ENCODE measurements at regions of chr6 and their contacts with region 1.

Region 1: DNA sequence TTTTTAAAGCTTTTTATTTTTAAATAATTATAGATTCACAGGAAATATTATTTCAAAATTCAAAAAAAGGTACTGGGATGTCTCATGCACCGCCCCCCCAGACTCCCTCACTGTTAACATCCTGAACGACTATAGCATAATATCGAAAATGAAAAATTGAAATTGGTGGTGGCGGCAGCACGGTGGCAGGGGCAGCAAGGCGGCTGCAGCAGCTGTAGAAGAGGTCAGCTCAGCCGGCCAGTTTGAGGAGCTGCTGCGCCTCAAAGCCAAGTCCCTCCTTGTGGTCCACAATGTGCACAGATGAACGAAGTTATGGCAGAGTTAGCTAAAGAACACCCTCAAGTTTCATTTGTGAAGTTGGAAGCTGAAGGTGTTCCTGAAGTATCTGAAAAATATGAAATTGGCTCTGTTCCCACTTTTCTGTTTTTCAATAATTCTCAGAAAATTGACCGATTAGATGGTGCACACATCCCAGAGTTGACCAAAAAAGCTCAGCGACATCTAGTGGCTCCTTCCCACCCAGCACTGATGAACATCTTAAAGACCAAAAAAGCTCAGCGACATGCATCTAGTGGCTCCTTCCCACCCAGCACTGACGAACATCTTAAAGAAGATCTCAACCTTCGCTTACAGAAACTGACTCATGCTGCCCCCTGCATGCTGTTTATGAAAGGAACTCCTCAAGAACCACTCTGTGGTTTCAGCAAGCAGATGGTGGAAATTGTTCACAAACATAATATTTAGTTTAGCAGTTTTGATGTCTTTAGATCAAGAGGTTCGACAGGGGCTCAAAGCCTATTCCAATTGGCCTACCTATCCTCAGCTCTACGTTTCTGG is 100.8 kb downstream of the FAM217A start:
- DNase-seq: peak; percentile 50 to 66 (median 56)
- H3K4me3 ChIP-seq: no peak overlapping the region
- H3K4me3 Mint-ChIP-seq: peak overlapping the region in 6 of 8 donors; percentile 49 to 76 (median 63)
- H3K27ac ChIP-seq: no peak overlapping the region
- H3K27ac Mint-ChIP-seq: peak overlapping the region in 2 of 7 donors; percentile 52 to 73
- H3K4me1 ChIP-seq: peaks cover 4% of the 10 kb centered on the region
- H3K4me1 Mint-ChIP-seq: peaks cover 7 to 12% (median 8%) of the 10 kb centered on the region in 4 donors
- H3K27me3 ChIP-seq: no peaks in the 10 kb centered on the region
- H3K27me3 Mint-ChIP-seq: peaks cover 0 to 3% of the 10 kb centered on the region in 2 donors

Region 2: DNA sequence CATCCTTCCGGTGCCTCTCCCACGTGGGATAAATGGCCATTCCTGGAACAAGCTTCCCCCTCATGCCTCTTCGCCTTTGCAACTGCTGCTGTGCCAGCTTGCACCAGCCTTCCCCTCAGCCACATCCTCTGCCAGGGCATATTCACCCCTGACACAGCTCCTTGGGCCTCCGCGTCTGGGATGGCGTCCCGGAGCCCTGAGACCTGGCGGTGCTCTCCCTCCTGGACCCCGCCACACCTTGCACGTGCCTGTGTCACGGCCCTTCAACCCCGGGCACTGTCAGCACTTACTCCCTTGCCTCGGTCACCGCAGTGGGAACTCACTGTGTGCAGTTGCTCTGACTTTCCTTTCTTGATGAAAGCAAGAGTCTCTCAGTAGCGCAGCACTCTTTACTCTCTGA is 846.4 kb before region 1 on chr6:
- CTCF ChIA-PET with region 1: no interaction called
- POLR2A ChIA-PET with region 1: no interaction called
- intact Hi-C with region 1: no loop called
- DNase-seq: no peak
- H3K4me3 ChIP-seq: no peak overlapping the region
- H3K4me3 Mint-ChIP-seq: no peak overlapping the region
- H3K27ac ChIP-seq: no peak overlapping the region
- H3K27ac Mint-ChIP-seq: peak overlapping the region in 1 of 7 donors; percentile 48
- H3K4me1 ChIP-seq: no peaks in the 10 kb centered on the region
- H3K4me1 Mint-ChIP-seq: no peaks in the 10 kb centered on the region
- H3K27me3 ChIP-seq: no peaks in the 10 kb centered on the region
- H3K27me3 Mint-ChIP-seq: no peaks in the 10 kb centered on the region

Region 3: DNA sequence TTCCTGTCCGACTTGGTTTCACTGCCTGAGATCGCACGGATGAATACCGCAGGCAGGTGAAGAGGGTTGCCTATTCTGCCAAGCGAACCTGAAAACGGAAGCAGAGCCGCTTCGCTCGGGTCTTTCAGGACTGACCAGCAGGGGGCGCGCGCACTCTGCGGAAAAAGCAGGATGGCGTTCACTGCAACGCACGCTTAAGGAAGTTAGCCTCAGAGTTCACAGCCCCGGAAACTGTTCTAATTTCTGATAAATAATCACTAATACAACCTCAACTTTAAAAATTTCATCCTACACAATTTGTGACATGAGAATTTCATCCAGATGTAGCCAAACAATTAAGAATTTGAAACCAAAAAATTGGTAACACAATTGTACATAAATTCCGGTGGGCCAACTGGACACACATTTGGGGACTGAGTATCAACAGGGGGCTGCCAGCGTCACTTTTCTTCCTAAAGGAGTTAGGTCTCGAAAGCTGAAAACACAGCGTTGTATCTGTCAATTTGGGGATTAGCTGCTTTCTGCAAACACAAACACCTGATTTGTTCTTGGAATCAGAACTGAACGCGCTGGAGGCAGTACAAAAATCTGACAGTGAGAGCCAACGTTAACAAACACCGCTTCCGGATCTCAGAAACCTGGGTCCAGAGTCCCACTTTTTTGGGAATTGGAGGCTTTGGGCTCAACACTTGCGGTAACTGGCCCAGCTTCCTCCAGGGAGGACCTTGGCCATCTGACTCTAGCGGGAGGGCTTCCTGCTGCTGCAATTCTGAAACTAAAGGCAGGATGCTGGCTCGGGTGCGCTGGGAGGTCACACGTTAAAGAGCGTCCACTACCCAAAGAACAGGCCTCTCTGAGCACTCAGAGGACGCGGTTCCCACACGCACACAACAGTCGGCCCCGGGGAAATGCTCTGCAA is 235.4 kb before region 1 on chr6:
- CTCF ChIA-PET with region 1: interaction called, 111 read pairs
- POLR2A ChIA-PET with region 1: interaction called, 4 read pairs
- intact Hi-C with region 1: loop called (anchors 1 kb)
- DNase-seq: peak; percentile 79 to 84 (median 81)
- H3K4me3 ChIP-seq: peak overlapping the region in 1 of 2 donors; percentile 26
- H3K4me3 Mint-ChIP-seq: peak overlapping the region; percentile 4 to 77 (median 61)
- H3K27ac ChIP-seq: no peak overlapping the region
- H3K27ac Mint-ChIP-seq: peak overlapping the region in 5 of 7 donors; percentile 34 to 83 (median 68)
- H3K4me1 ChIP-seq: peaks cover 12% of the 10 kb centered on the region
- H3K4me1 Mint-ChIP-seq: peaks cover 6 to 13% (median 11%) of the 10 kb centered on the region in 4 donors
- H3K27me3 ChIP-seq: no peaks in the 10 kb centered on the region
- H3K27me3 Mint-ChIP-seq: peaks cover 3 to 4% of the 10 kb centered on the region in 2 donors

Region 4: GRCh38 chr6:3816251-3816650 is 161.8 kb before region 1 on chr6:
- CTCF ChIA-PET with region 1: no interaction called
- POLR2A ChIA-PET with region 1: no interaction called
- intact Hi-C with region 1: no loop called
- DNase-seq: no peak
- H3K4me3 ChIP-seq: no peak overlapping the region
- H3K4me3 Mint-ChIP-seq: no peak overlapping the region
- H3K27ac ChIP-seq: no peak overlapping the region
- H3K27ac Mint-ChIP-seq: no peak overlapping the region
- H3K4me1 ChIP-seq: no peaks in the 10 kb centered on the region
- H3K4me1 Mint-ChIP-seq: no peaks in the 10 kb centered on the region
- H3K27me3 ChIP-seq: no peaks in the 10 kb centered on the region
- H3K27me3 Mint-ChIP-seq: no peaks in the 10 kb centered on the region

Region 5: GRCh38 chr6:3929281-3929798 is 48.8 kb before region 1 on chr6:
- CTCF ChIA-PET with region 1: interaction called, 18 read pairs
- POLR2A ChIA-PET with region 1: interaction called, 3 read pairs
- intact Hi-C with region 1: no loop called
- DNase-seq: no peak
- H3K4me3 ChIP-seq: no peak overlapping the region
- H3K4me3 Mint-ChIP-seq: no peak overlapping the region
- H3K27ac ChIP-seq: no peak overlapping the region
- H3K27ac Mint-ChIP-seq: no peak overlapping the region
- H3K4me1 ChIP-seq: no peaks in the 10 kb centered on the region
- H3K4me1 Mint-ChIP-seq: no peaks in the 10 kb centered on the region
- H3K27me3 ChIP-seq: no peaks in the 10 kb centered on the region
- H3K27me3 Mint-ChIP-seq: no peaks in the 10 kb centered on the region

Region 6: DNA sequence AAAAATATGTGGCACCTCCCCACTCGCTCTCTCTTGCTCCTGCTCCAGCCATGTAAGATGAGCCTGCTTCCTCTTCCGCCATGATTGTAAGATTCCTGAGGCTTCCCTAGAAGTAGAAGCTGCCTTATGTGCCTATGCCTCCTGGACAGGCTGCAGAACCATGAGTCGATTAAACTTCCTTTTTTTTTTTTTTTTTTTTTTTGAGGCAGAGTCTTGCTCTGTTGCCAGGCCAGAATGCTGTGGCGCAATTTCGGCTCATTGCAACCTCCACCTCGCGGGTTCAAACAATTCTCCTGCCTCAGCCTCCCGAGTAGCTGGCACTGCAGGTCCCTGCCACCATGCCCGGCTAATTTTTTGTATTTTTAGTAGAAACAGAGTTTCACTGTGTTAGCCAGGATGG is 11.7 kb before region 1 on chr6:
- CTCF ChIA-PET with region 1: interaction called, 26 read pairs
- POLR2A ChIA-PET with region 1: interaction called, 3 read pairs
- intact Hi-C with region 1: no loop called
- DNase-seq: no peak
- H3K4me3 ChIP-seq: no peak overlapping the region
- H3K4me3 Mint-ChIP-seq: no peak overlapping the region
- H3K27ac ChIP-seq: no peak overlapping the region
- H3K27ac Mint-ChIP-seq: no peak overlapping the region
- H3K4me1 ChIP-seq: no peaks in the 10 kb centered on the region
- H3K4me1 Mint-ChIP-seq: peaks cover 0 to 2% (median 0%) of the 10 kb centered on the region in 4 donors
- H3K27me3 ChIP-seq: no peaks in the 10 kb centered on the region
- H3K27me3 Mint-ChIP-seq: no peaks in the 10 kb centered on the region

Region 7: GRCh38 chr6:3997177-3997770 is 19.2 kb after region 1 on chr6:
- CTCF ChIA-PET with region 1: interaction called, 18 read pairs
- POLR2A ChIA-PET with region 1: no interaction called
- intact Hi-C with region 1: no loop called
- DNase-seq: no peak
- H3K4me3 ChIP-seq: no peak overlapping the region
- H3K4me3 Mint-ChIP-seq: no peak overlapping the region
- H3K27ac ChIP-seq: no peak overlapping the region
- H3K27ac Mint-ChIP-seq: peak overlapping the region in 1 of 7 donors; percentile 48
- H3K4me1 ChIP-seq: no peaks in the 10 kb centered on the region
- H3K4me1 Mint-ChIP-seq: peaks cover 12 to 24% (median 20%) of the 10 kb centered on the region in 4 donors
- H3K27me3 ChIP-seq: no peaks in the 10 kb centered on the region
- H3K27me3 Mint-ChIP-seq: no peaks in the 10 kb centered on the region

Region 8: DNA sequence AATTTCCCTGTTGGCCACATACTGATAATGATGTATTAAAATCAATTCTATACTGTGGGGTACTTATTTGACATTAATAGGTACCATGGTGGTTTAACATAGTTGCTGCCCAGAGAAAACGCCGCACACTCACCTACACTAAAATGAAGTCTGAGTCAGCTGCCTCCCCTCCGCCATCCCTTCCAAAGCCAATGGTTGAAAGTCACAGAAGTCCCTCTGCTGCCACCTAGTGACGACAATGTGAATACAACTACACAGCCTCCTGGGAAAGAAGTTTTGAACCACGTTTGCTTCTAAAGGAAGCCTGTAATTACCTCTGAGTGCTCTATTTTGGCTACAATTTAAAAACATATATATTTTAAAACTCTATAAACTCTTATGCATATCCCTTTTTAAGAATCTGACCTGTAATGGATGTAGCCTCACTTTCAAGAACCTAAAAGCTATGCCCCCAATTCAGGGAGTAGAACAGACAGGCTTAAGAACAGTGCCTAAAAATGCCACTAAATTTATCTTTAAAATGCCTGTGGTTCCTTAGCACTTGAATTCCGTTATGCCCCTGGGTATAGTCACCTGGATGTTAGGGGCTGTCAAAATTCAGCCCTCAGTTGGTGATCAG is 177.9 kb after region 1 on chr6:
- CTCF ChIA-PET with region 1: interaction called, 14 read pairs
- POLR2A ChIA-PET with region 1: no interaction called
- intact Hi-C with region 1: no loop called
- DNase-seq: peak; percentile 69 to 81 (median 73)
- H3K4me3 ChIP-seq: no peak overlapping the region
- H3K4me3 Mint-ChIP-seq: no peak overlapping the region
- H3K27ac ChIP-seq: no peak overlapping the region
- H3K27ac Mint-ChIP-seq: peak overlapping the region in 1 of 7 donors; percentile 25
- H3K4me1 ChIP-seq: no peaks in the 10 kb centered on the region
- H3K4me1 Mint-ChIP-seq: peaks cover 0 to 5% (median 2%) of the 10 kb centered on the region in 4 donors
- H3K27me3 ChIP-seq: no peaks in the 10 kb centered on the region
- H3K27me3 Mint-ChIP-seq: peaks cover 2 to 4% of the 10 kb centered on the region in 2 donors

Region 9: GRCh38 chr6:5486214-5486613 is 1508.1 kb after region 1 on chr6:
- CTCF ChIA-PET with region 1: no interaction called
- POLR2A ChIA-PET with region 1: no interaction called
- intact Hi-C with region 1: no loop called
- DNase-seq: no peak
- H3K4me3 ChIP-seq: no peak overlapping the region
- H3K4me3 Mint-ChIP-seq: no peak overlapping the region
- H3K27ac ChIP-seq: no peak overlapping the region
- H3K27ac Mint-ChIP-seq: peak overlapping the region in 1 of 7 donors; percentile 44
- H3K4me1 ChIP-seq: no peaks in the 10 kb centered on the region
- H3K4me1 Mint-ChIP-seq: peaks cover 0 to 12% (median 8%) of the 10 kb centered on the region in 4 donors
- H3K27me3 ChIP-seq: no peaks in the 10 kb centered on the region
- H3K27me3 Mint-ChIP-seq: no peaks in the 10 kb centered on the region

Measured in CD4-positive, alpha-beta memory T cell (primary cell).